A549 (cell line): ENCODE measurements at regions of chr2 and their contacts with region 1.

Region 1: GRCh38 chr2:216698895-216699294 is 3.5 kb upstream of the IGFBP5 start:
- DNase-seq: peak; percentile 42 to 63
- ATAC-seq: peak; percentile 65 to 78
- H3K4me3 ChIP-seq: no peak overlapping the region
- H3K27ac ChIP-seq: no peak overlapping the region
- H3K4me1 ChIP-seq: peaks cover 25% of the 10 kb centered on the region; the same call in 2 of the 3 replicates
- CTCF ChIP-seq: peak; percentile 70
- EP300 ChIP-seq: no peak
- POLR2A ChIP-seq: no peak
- RAD21 ChIP-seq: peak; percentile 82 to 83

Region 2: DNA sequence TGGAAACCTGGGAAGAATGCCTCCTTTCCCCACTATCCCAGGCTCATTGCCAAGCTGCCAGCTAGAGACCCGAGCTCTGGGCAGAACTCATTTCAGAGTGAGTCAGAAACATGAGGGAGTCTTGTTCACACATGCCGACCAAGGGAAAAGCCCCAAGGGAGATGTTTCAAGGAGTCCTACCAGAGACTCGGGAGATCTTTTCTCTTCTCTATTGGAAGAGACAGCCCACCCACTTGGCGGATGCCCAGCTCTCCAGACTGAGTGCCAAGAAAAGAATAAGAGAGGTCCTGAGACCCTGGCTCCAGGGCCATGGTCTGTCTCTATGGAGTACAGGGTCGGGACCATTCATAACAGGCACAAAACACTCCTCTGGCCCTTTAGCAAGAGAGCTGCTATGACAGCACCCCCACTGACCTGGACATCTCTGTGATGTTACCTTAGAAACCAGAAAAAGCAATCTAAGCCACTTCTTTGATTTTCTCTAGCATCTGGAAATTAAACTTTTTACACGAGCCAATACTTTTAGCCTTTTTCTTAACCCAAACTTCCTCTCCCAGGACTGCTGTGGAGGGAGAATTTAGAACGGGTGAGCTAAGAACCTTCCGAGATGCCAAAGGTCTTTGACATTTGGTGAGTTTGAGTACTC is 14.9 kb after region 1 on chr2:
- CTCF ChIA-PET with region 1: interaction called, 12 read pairs
- POLR2A ChIA-PET with region 1: no interaction called
- DNase-seq: peak; percentile 15 to 41
- ATAC-seq: peak; percentile 75 to 81
- H3K4me3 ChIP-seq: no peak overlapping the region
- H3K27ac ChIP-seq: 0 out of 6 replicates have a peak overlapping the region, but pooled peaks of 1 of the 2 experiments have one; percentile 45
- H3K4me1 ChIP-seq: peaks cover 9% of the 10 kb centered on the region
- CTCF ChIP-seq: no peak
- EP300 ChIP-seq: no peak
- POLR2A ChIP-seq: no peak
- RAD21 ChIP-seq: no peak

Region 3: GRCh38 chr2:216858312-216858711 is 159.4 kb after region 1 on chr2:
- CTCF ChIA-PET with region 1: no interaction called
- POLR2A ChIA-PET with region 1: no interaction called
- DNase-seq: no peak
- ATAC-seq: no peak
- H3K4me3 ChIP-seq: no peak overlapping the region
- H3K27ac ChIP-seq: no peak overlapping the region
- H3K4me1 ChIP-seq: no peaks in the 10 kb centered on the region
- CTCF ChIP-seq: no peak
- EP300 ChIP-seq: no peak
- POLR2A ChIP-seq: no peak
- RAD21 ChIP-seq: no peak

Region 4: GRCh38 chr2:217142649-217143266 is 443.9 kb after region 1 on chr2:
- CTCF ChIA-PET with region 1: interaction called, 12 read pairs
- POLR2A ChIA-PET with region 1: no interaction called
- DNase-seq: peak in 1 of 2 experiments; percentile 26
- ATAC-seq: no peak
- H3K4me3 ChIP-seq: no peak overlapping the region
- H3K27ac ChIP-seq: no peak overlapping the region
- H3K4me1 ChIP-seq: no peaks in the 10 kb centered on the region
- CTCF ChIP-seq: peak; percentile 46
- EP300 ChIP-seq: no peak
- POLR2A ChIP-seq: no peak
- RAD21 ChIP-seq: peak; percentile 42 to 63; a peak in 3 of 5 replicates

Region 5: GRCh38 chr2:217510771-217511291 is 811.9 kb after region 1 on chr2:
- CTCF ChIA-PET with region 1: interaction called, 10 read pairs
- POLR2A ChIA-PET with region 1: no interaction called
- DNase-seq: peak; percentile 69 to 85
- ATAC-seq: peak; percentile 83 to 95
- H3K4me3 ChIP-seq: no peak overlapping the region
- H3K27ac ChIP-seq: peak overlapping the region in 1 of 2 experiments; percentile 42; a peak in 2 of 6 replicates
- H3K4me1 ChIP-seq: peaks cover 7% of the 10 kb centered on the region; the same call in 2 of the 3 replicates
- CTCF ChIP-seq: peak; percentile 83
- EP300 ChIP-seq: no peak
- POLR2A ChIP-seq: no peak
- RAD21 ChIP-seq: peak; percentile 95 to 96